PC-9 (cell line): ENCODE measurements at regions of chr11 and their contacts with region 1.

Region 1: GRCh38 chr11:119168471-119169281 is at the start of gene NLRX1:
- DNase-seq: peak; percentile 67 to 80
- H3K4me3 ChIP-seq: peak within 1 kb of the TSS; percentile 69
- H3K27ac ChIP-seq: peak within 1 kb of the TSS; percentile 81
- H3K4me1 ChIP-seq: peaks cover 33% of the 10 kb centered on the region
- H3K27me3 ChIP-seq: no peaks in the 10 kb centered on the region
- CTCF ChIP-seq: peak; percentile 92
- total RNA-seq, gene NLRX1: 18.4 and 22.5 TPM in 2 replicates

Region 2: GRCh38 chr11:119180729-119181676 is 12.3 kb after region 1 on chr11:
- CTCF ChIA-PET with region 1: no interaction called
- POLR2A ChIA-PET with region 1: interaction called, 10 read pairs
- intact Hi-C with region 1: no loop called
- DNase-seq: no peak
- H3K4me3 ChIP-seq: no peak overlapping the region
- H3K27ac ChIP-seq: no peak overlapping the region
- H3K4me1 ChIP-seq: peaks cover 6% of the 10 kb centered on the region
- H3K27me3 ChIP-seq: no peaks in the 10 kb centered on the region
- CTCF ChIP-seq: no peak

Region 3: DNA sequence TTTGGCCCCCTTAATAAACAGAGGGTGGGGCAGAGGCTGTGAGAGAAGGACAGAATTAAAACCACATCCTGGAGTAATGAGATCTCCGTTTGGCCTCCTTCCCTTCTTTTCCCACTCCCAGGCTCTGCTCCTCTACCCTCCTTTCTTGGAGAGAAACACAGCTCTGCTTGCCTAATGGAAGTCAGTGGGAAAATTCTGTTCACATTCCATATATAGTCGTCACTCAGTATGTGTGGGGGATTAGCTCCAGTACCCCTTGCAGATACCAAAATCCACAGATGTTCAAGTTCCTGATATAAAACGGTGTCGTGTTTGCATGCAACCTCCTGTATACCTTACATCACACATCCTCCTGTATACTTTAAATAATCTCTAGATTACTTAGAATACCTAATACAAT is 291.9 kb after region 1 on chr11:
- CTCF ChIA-PET with region 1: no interaction called
- POLR2A ChIA-PET with region 1: no interaction called
- intact Hi-C with region 1: no loop called
- DNase-seq: no peak
- H3K4me3 ChIP-seq: no peak overlapping the region
- H3K27ac ChIP-seq: no peak overlapping the region
- H3K4me1 ChIP-seq: 0 out of 2 replicates have a peak, but pooled peaks cover 8% of the 10 kb centered on the region
- H3K27me3 ChIP-seq: no peaks in the 10 kb centered on the region
- CTCF ChIP-seq: no peak

Region 4: DNA sequence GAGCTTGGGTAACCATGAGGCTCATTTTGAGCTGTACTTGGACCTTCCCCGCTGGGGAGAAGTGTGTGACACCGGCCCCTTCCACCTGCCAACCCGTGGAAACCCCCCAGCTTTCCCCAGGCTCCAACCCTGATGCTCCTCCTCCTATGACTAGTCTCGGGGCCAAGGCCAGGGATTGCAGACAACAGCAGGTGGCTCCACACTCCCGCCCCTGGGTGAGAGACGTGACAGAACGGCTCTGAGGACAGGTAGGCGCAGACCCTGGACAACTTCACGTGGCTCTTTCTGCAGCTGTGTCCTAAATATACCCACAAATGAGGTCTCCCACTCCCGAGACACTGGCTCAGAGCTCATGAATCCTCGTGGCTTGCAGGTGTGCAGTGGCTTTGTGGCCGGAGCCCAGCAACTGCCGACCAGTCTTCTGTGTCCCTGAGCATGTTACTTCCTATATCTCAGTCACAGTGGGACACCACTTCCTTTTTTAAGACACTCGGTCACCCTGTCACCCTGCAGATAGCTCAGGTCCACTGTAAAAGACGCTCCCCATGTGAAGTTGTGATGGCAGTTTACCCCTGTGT is 505.2 kb after region 1 on chr11:
- CTCF ChIA-PET with region 1: no interaction called
- POLR2A ChIA-PET with region 1: interaction called, 39 read pairs
- intact Hi-C with region 1: no loop called
- DNase-seq: no peak
- H3K4me3 ChIP-seq: no peak overlapping the region
- H3K27ac ChIP-seq: no peak overlapping the region
- H3K4me1 ChIP-seq: peaks cover 15% of the 10 kb centered on the region
- H3K27me3 ChIP-seq: no peaks in the 10 kb centered on the region
- CTCF ChIP-seq: no peak